Sciatic nerve (tissue), 2 donors: ENCODE measurements at regions of chr3 and their contacts with region 1.

Region 1: GRCh38 chr3:40162616-40163015 is 146.9 kb upstream of the EIF1B start:
- DNase-seq: no peak
- ATAC-seq: no peak

Region 2: GRCh38 chr3:40137593-40138295 is 24.9 kb before region 1 on chr3:
- intact Hi-C with region 1: no loop called
- DNase-seq: no peak
- ATAC-seq: no peak

Region 3: GRCh38 chr3:40680685-40681657 is 518.4 kb after region 1 on chr3:
- intact Hi-C with region 1: no loop called
- DNase-seq: no peak
- ATAC-seq: peak; percentile 70

Region 4: DNA sequence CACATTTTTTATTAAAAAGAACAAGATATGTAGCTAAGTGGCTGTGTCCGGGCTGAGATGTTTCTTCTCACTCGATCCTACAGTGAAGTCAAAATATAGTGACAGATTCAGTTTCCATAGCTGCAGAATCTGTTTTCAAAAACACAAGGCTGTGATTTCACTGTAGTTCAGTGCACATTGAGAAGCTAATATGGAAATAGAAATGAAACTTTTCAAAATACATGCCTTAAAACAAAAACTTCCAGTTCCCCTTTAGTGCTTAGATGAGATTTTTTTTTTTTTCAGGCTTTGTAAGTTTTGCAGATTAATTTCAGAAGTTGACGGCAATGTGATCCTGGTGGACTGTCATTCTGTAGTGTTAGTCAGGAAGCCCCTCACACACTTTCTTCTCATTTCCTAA is 1904.7 kb after region 1 on chr3:
- intact Hi-C with region 1: loop called (anchors 5 kb)
- DNase-seq: no peak
- ATAC-seq: peak; percentile 74